ENCODE measurements at regions of chr19 and their contacts with region 1.

Region 1: DNA sequence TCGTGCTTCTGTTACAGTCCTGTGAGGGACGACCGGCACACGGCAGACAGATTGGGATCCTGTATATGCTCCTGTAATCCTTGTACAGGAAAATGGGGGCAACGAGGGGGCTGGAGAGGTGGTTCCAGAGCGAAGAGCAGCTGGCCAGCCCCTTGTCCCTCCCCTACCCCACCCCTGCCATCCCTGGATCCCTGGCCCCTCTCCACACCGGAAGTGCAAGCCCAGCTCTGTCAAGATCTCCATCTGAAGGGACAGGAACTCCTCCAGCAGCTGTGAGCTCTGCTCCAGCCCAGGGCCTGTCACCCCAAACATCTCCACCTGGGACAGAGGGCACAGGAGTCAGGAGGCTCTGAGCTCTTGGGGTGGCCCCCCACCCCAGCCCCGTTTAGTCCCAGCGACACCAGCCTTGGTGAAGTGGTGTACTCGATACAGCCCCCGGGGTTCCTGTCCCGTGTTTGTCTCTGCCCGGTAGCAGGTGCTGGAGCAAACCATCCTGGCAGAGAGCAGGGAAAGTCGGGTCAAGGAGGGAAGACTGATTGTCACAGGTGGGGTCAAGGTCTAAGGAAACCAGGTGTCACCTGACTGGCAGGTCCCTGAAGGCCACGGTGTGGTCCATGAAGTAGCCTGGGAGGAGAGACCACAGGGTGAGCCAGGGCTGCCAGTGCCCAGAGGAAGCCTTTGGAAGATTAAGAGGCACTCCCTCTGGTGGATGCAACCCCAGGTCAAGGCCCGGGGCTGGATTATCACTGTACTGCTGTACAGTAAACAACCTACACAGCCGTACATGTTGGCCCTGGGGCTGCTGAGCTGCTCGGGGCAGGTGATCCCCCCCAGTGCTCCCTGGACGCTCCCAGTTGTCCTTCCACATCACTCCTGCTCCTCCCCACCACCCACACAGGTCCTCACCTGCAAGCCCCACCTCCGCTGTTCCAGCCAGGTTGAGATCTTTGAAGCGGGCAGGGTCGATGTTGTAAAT is 5.8 kb upstream of the CCER2 start:
- DNase-seq: no peak
- ATAC-seq: no peak
- H3K4me3 ChIP-seq: no peak overlapping the region
- H3K27ac ChIP-seq: no peak overlapping the region
- H3K4me1 ChIP-seq: no peaks in the 10 kb centered on the region
- H3K27me3 ChIP-seq: no peaks in the 10 kb centered on the region
- CTCF ChIP-seq: no peak
- POLR2A ChIP-seq: no peak

Region 2: DNA sequence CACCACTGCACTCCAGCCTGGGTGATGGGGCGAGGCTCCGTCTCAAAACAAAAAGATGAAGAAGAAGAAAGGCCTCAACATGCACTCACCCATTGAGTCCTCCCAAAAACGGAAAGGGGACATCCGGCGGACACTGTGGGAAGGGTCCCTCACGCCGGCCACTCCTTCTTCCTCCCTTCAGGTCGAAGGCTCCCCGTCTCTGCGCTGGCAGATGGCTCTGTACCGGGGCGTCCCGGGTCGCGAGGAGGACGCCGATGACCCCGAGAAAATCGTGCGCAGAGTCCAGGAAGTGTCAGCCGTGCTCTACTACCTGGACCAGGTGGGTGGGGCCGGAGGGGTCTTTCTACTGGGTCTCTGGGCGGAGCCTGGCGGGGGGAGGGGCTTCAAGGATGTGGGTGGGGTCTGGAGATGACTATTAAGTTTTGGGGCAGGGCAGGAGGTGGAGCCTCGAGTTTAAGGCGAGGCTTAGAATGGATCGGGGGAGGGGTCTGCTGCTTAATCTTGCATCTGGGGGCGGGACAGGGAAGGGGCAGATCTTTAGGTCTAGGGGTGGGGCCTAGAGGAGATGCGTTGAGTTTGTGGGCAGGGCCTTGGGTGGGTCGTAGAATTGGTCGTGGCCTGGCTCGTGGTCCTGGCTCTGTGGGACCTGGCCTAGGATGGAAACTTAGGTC is 390.2 kb before region 1 on chr19:
- intact Hi-C with region 1: loop called (anchors 10 kb)
- DNase-seq: no peak
- ATAC-seq: no peak
- H3K4me3 ChIP-seq: no peak overlapping the region
- H3K27ac ChIP-seq: no peak overlapping the region
- H3K4me1 ChIP-seq: no peaks in the 10 kb centered on the region
- H3K27me3 ChIP-seq: no peaks in the 10 kb centered on the region
- CTCF ChIP-seq: no peak
- POLR2A ChIP-seq: no peak

Region 3: GRCh38 chr19:38592940-38593339 is 324.9 kb before region 1 on chr19:
- intact Hi-C with region 1: no loop called
- DNase-seq: no peak
- ATAC-seq: no peak
- H3K4me3 ChIP-seq: no peak overlapping the region
- H3K27ac ChIP-seq: no peak overlapping the region
- H3K4me1 ChIP-seq: peaks cover 7% of the 10 kb centered on the region
- H3K27me3 ChIP-seq: no peaks in the 10 kb centered on the region
- CTCF ChIP-seq: no peak
- POLR2A ChIP-seq: no peak